Transverse colon (tissue), 4 donors: ENCODE measurements at regions of chr2 and their contacts with region 1.

Region 1: GRCh38 chr2:37635504-37636380 is 35.7 kb downstream of the CDC42EP3 start:
- DNase-seq: peak; percentile 28
- H3K4me3 ChIP-seq: no peak overlapping the region
- H3K27ac ChIP-seq: peak overlapping the region in 3 of 4 donors; percentile 11 to 34 (median 28)
- H3K4me1 ChIP-seq: peaks cover 0 to 3% (median 0%) of the 10 kb centered on the region in 4 donors
- H3K27me3 ChIP-seq: no peaks in the 10 kb centered on the region
- CTCF ChIP-seq: no peak
- EP300 ChIP-seq: no peak
- POLR2A ChIP-seq: no peak

Region 2: GRCh38 chr2:37149626-37150322 is 486.0 kb before region 1 on chr2:
- in situ Hi-C with region 1: no loop called
- intact Hi-C with region 1: loop called (anchors 10 kb)
- DNase-seq: no peak
- H3K4me3 ChIP-seq: peak overlapping the region in 1 of 4 donors; percentile 7
- H3K27ac ChIP-seq: peak overlapping the region; percentile 35 to 61 (median 52)
- H3K4me1 ChIP-seq: peaks cover 4 to 32% (median 13%) of the 10 kb centered on the region in 4 donors
- H3K27me3 ChIP-seq: no peaks in the 10 kb centered on the region
- CTCF ChIP-seq: no peak
- EP300 ChIP-seq: no peak
- POLR2A ChIP-seq: no peak